ENCODE measurements at regions of chr17 and their contacts with region 1.

Region 1: GRCh38 chr17:15076991-15077663 is 188.0 kb downstream of the PMP22 start:
- DNase-seq: no peak
- H3K4me3 ChIP-seq: no peak overlapping the region
- H3K27ac ChIP-seq: no peak overlapping the region
- H3K4me1 ChIP-seq: no peaks in the 10 kb centered on the region
- H3K27me3 ChIP-seq: peaks cover 9% of the 10 kb centered on the region
- CTCF ChIP-seq: no peak

Region 2: GRCh38 chr17:15278924-15279477 is 201.9 kb after region 1 on chr17:
- CTCF ChIA-PET with region 1: interaction called, 11 read pairs
- POLR2A ChIA-PET with region 1: no interaction called
- intact Hi-C with region 1: no loop called
- DNase-seq: peak in 1 of 2 experiments; percentile 37
- H3K4me3 ChIP-seq: no peak overlapping the region
- H3K27ac ChIP-seq: no peak overlapping the region
- H3K4me1 ChIP-seq: no peaks in the 10 kb centered on the region
- H3K27me3 ChIP-seq: no peaks in the 10 kb centered on the region
- CTCF ChIP-seq: no peak

Measured in PC-9 (cell line).